Caco-2 (cell line): ENCODE measurements at regions of chr4 and their contacts with region 1.

Region 1: DNA sequence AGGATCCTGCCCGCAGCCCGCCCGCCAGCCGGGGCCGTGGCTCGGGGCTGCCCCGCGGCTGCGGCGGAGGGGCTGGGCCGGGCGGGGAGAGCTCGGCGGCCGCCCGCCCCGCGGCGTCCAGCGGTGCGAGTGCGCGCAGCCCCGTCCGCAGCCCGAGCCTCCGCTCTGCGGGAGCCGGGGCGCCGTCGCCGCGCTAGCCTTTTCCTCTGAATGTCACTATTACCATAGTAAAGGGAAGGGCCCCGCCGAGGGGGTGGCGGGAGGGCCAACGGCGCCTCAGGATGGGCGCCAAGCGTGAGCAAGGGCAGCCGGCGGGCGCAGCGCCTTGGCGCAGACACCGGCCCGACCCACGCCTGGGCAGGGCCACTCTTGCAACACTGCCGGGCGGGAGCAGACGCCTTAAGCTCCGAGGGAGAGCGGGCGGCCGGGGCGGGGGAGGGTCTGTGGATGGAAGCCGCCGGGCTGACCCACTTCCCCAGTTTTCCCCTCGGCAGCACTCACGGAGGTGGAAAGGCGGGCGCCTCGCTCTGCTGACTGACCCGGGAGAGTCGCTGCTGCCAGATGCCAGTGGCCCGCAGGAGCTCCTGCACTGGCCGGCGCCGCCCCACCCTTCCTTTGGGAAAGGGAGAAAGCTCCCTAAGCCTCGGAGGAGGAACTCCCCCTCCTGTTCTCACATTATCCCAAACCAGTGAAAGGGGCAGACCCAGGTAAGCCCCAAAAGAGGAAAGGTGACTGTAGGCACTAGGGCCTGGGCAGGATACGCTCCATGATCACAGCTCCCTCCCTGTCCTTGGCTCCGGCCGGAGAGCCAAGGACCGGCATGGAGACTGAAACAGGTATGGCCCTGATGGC is 329.4 kb downstream of the HNRNPD start:
- DNase-seq: peak; percentile 79 to 80
- H3K4me3 ChIP-seq: peak overlapping the region; percentile 63
- H3K4me3 Mint-ChIP-seq: peak overlapping the region; percentile 93
- H3K27ac Mint-ChIP-seq: no peak overlapping the region
- H3K4me1 ChIP-seq: peaks cover 19% of the 10 kb centered on the region
- H3K4me1 Mint-ChIP-seq: peaks cover 7% of the 10 kb centered on the region
- H3K27me3 ChIP-seq: no peaks in the 10 kb centered on the region
- H3K27me3 Mint-ChIP-seq: no peaks in the 10 kb centered on the region
- CTCF ChIP-seq: no peak

Region 2: DNA sequence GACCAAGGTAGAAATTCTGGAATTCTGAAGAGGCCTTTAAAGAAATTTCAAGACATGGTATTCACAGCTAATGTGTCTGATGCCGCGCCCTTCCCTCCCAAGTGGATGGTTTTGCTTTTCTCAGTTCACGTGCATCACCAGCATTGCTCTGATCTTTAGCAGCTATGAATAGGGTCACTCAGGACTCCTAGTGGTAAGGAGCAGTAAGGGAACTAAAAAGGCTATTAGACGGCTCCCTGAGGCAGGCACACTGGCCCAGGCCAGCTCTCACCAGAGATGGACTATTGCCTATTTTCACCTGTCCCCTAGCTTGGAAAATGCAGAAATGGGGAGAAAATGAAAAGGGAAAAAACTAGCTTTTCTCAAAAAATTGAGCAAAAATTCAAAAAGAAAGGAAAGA is 125.1 kb before region 1 on chr4:
- CTCF ChIA-PET with region 1: no interaction called
- POLR2A ChIA-PET with region 1: no interaction called
- intact Hi-C with region 1: loop called (anchors 5 kb)
- DNase-seq: peak; percentile 46 to 49
- H3K4me3 ChIP-seq: no peak overlapping the region
- H3K4me3 Mint-ChIP-seq: no peak overlapping the region
- H3K27ac Mint-ChIP-seq: no peak overlapping the region
- H3K4me1 ChIP-seq: peaks cover 5% of the 10 kb centered on the region; the same call in 1 of the 2 replicates
- H3K4me1 Mint-ChIP-seq: peaks cover 13% of the 10 kb centered on the region
- H3K27me3 ChIP-seq: no peaks in the 10 kb centered on the region
- H3K27me3 Mint-ChIP-seq: no peaks in the 10 kb centered on the region
- CTCF ChIP-seq: peak in 1 of 2 experiments; percentile 63

Region 3: DNA sequence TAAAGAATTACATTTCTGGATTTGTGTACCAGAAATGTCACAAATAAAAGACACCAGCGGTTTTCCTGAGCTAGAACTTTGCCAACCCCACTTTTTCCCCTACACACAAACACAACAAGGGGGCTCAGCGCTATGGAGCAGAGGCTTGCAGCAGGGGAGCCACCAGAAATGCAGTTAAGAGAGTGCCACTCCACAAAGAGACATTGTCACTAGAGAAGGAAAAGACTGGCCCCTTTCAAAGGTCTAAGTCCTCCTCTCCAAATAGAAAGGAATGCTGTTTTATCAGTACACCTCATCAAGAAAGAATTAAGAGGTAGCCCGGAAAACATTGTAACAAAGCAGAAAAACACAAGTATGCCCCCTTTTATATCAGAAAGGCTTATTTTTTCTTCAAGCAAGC is 90.1 kb before region 1 on chr4:
- CTCF ChIA-PET with region 1: interaction called, 3 read pairs
- POLR2A ChIA-PET with region 1: no interaction called
- intact Hi-C with region 1: loop called (anchors 1 kb)
- DNase-seq: peak; percentile 49 to 56
- H3K4me3 ChIP-seq: no peak overlapping the region
- H3K4me3 Mint-ChIP-seq: peak overlapping the region; percentile 69
- H3K27ac Mint-ChIP-seq: peak overlapping the region; percentile 92
- H3K4me1 ChIP-seq: peaks cover 60% of the 10 kb centered on the region
- H3K4me1 Mint-ChIP-seq: peaks cover 18% of the 10 kb centered on the region
- H3K27me3 ChIP-seq: no peaks in the 10 kb centered on the region
- H3K27me3 Mint-ChIP-seq: no peaks in the 10 kb centered on the region
- CTCF ChIP-seq: no peak

Region 4: DNA sequence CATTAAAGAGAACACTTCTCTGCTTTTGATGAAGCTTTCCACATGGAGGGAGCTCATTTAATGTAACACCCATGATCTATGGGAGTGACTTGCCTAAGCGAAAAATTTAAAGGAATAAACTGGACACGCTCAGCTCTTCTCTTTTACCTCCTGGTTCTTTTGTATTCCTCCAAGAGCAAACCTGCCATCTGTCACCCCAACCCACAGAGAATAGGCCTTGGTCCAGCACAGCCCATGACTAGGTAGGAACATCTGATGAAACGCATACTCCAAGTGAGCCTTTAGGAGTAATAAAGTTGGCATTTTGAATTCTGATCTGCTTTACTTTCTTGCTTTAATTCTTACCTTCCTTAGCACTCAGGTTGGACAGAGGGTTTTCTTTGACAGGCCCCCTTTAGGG is 59.6 kb before region 1 on chr4:
- CTCF ChIA-PET with region 1: no interaction called
- POLR2A ChIA-PET with region 1: no interaction called
- intact Hi-C with region 1: loop called (anchors 2 kb)
- DNase-seq: no peak
- H3K4me3 ChIP-seq: no peak overlapping the region
- H3K4me3 Mint-ChIP-seq: no peak overlapping the region
- H3K27ac Mint-ChIP-seq: no peak overlapping the region
- H3K4me1 ChIP-seq: peaks cover 21% of the 10 kb centered on the region
- H3K4me1 Mint-ChIP-seq: peaks cover 9% of the 10 kb centered on the region
- H3K27me3 ChIP-seq: no peaks in the 10 kb centered on the region
- H3K27me3 Mint-ChIP-seq: no peaks in the 10 kb centered on the region
- CTCF ChIP-seq: no peak

Region 5: DNA sequence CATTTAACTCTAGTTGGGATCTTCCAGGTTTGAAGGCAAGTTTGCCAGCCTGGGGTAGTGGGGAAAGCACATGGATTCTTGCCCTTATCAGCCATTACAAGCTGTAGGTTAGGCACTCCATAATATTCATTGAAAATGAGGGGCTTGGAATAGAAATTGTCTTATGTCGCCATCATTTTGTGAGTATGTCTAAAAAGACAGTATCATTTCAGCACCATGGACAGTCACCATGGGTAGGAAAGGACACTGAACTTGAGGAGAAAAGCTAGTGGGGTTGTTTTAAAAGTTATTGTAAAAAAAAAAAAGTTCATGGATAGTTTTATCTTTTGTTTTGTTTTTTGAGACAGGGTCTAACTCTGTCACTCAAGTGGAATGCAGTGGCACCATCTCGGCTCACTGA is 26.7 kb before region 1 on chr4:
- CTCF ChIA-PET with region 1: no interaction called
- POLR2A ChIA-PET with region 1: interaction called, 3 read pairs
- intact Hi-C with region 1: loop called (anchors 2 kb)
- DNase-seq: peak in 1 of 2 experiments; percentile 57
- H3K4me3 ChIP-seq: no peak overlapping the region
- H3K4me3 Mint-ChIP-seq: no peak overlapping the region
- H3K27ac Mint-ChIP-seq: no peak overlapping the region
- H3K4me1 ChIP-seq: peaks cover 3% of the 10 kb centered on the region; the same call in 1 of the 2 replicates
- H3K4me1 Mint-ChIP-seq: peaks cover 6% of the 10 kb centered on the region
- H3K27me3 ChIP-seq: no peaks in the 10 kb centered on the region
- H3K27me3 Mint-ChIP-seq: no peaks in the 10 kb centered on the region
- CTCF ChIP-seq: no peak

Region 6: DNA sequence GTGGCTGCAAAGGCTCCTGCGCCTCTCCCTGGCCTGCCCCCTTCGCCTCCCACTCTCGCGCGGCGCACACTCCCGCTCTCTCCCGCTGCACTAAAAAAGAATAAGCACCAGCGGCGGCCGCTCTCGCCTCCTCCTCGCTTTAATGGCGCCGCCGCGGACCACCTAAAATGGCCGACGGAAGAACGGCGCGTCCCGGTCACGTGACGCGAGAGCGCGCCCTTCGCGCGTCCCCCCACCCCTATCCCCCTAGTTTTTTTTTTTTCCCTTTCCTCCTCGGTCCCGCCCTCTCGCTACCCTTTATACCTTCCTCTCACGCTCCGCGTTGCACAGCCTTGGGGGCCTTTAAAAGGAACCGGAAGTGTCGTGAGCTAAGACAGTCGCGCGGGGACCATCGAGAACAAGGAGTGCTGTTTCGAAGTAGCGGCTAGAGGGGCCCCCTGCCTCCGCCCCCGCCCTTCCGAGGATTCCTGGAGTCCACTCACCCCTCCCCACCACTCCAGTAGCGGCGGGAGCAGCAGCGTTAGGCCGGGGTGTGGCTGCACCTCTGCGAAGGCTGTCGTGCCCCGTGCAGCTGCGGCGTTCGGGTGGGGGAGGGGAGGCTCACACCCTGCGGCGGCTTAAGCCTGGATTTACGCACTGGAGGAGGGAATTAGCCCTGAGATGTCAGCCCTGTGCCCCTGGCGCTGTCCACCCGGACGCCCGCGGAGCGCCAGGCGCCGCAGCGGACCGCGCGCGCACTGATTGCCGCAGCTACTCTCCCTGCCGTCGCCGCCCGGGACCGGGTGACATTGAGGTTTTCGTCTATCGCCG is 329.7 kb after region 1 on chr4 and contains the start of gene HNRNPD:
- CTCF ChIA-PET with region 1: no interaction called
- POLR2A ChIA-PET with region 1: no interaction called
- intact Hi-C with region 1: no loop called
- DNase-seq: peak; percentile 99
- H3K4me3 ChIP-seq: peak within 1 kb of the TSS; percentile 92
- H3K4me3 Mint-ChIP-seq: peak within 1 kb of the TSS; percentile 98
- H3K27ac Mint-ChIP-seq: peak within 1 kb of the TSS; percentile 98
- H3K4me1 ChIP-seq: peaks cover 15% of the 10 kb centered on the region
- H3K4me1 Mint-ChIP-seq: no peaks in the 10 kb centered on the region
- H3K27me3 ChIP-seq: no peaks in the 10 kb centered on the region
- H3K27me3 Mint-ChIP-seq: no peaks in the 10 kb centered on the region
- CTCF ChIP-seq: no peak
- total RNA-seq, gene HNRNPD: 405 and 408 TPM in 2 replicates